ENCODE measurements at regions of chr14 and their contacts with region 1.

Region 1: GRCh38 chr14:75050852-75051554 is at the start of gene MLH3:
- DNase-seq: no peak

Region 2: GRCh38 chr14:75063407-75064213 is 12.6 kb after region 1 on chr14 and contains the start of gene ACYP1:
- CTCF ChIA-PET with region 1: no interaction called
- POLR2A ChIA-PET with region 1: interaction called, 14 read pairs
- DNase-seq: peak; percentile 96

Region 3: GRCh38 chr14:75096959-75097358 is 46.0 kb after region 1 on chr14:
- CTCF ChIA-PET with region 1: no interaction called
- POLR2A ChIA-PET with region 1: no interaction called
- DNase-seq: no peak

Region 4: DNA sequence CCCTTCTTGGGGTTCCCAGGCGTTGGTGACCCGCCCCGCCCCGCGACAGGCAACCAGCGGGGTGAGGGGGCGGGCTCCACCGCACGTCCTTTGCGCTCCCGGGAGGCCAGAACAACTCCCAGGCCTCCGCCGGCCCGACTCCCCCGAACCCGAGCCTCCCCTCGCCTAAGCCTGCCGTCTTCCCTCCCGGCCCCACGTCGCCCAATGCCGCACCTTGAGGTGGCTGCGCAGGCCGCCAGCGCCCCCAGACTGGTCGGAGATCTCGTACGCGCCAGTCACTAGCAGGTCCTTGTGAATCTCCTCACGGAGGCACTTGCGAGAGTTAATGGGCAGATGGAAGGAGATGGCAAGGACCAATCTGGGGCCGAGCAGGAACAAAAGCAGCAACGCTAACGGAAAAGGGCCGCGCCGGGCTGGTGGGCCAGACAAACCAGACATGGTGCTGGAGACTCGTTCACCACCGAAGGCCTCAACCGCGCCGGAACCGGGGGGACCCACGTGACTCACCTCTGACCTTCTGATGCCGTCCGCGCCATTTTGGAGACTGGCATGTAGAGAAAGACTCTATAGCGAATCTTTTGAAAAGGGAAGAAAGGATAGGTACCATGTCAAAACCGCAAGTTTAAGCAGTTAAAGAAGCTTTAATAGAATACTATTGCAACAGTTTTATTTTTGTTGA is 125.3 kb after region 1 on chr14 and contains the start of gene TMED10:
- CTCF ChIA-PET with region 1: no interaction called
- POLR2A ChIA-PET with region 1: no interaction called
- DNase-seq: peak; percentile 77

Measured in HEK293T (cell line).